Dorsolateral prefrontal cortex (tissue), 120 donors: ENCODE measurements at regions of chr6 and their contacts with region 1.

Region 1: GRCh38 chr6:53794720-53795253 is at the start of gene LRRC1:
- DNase-seq: peak; percentile 80 to 94 (median 90)
- H3K4me3 ChIP-seq: peak within 1 kb of the TSS; percentile 57 to 99 (median 92)
- H3K27ac ChIP-seq: peak within 1 kb of the TSS; percentile 20 to 95 (median 89)
- H3K27me3 ChIP-seq: peaks cover 0 to 2% (median 0%) of the 10 kb centered on the region in 45 donors
- CTCF ChIP-seq: peak in 4 of 56 donors; percentile 0 to 28 (median 9)
- total RNA-seq, gene LRRC1: 5.4 to 73.2 (median 19.4) TPM

Region 2: DNA sequence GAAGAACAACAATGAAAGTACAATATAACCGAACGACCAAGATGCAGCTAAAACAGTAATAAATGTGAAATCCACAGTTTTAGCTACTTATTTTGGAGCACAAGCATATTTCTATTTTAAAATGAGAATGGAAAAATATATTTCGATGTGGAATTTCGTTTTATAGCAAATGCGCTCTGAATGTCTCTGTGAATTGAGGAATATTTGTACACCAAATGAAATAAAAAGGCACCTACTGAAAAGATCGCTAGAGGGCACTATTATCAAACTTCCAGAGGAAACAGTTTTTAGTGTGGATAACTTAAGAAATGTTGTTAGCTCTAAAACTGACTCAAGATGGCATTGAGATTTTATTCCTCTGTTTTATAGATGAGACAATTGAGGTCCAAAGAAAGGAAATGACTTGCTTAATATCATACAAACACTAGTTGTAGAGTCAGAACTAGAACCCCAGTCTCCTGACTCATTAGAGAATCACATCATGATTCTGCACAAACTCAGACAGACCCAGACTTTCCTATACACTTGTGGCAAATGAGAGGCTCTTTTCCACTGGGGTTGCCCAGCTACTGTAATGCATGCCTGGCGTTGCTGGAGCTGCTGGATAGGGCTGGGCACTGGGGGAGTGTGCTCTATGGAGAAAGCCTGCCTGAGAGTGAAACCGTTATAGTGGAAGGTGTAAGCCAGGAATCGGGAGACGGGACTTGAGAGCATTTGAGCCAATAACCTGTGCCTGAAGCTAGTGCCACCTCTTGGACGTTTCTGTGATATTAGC is 301.7 kb before region 1 on chr6:
- intact Hi-C with region 1: no loop called
- DNase-seq: no peak
- H3K4me3 ChIP-seq: peak overlapping the region in 54 of 59 donors; percentile 9 to 64 (median 42)
- H3K27ac ChIP-seq: peak overlapping the region in 18 of 59 donors; percentile 8 to 63 (median 31)
- H3K27me3 ChIP-seq: no peaks in the 10 kb centered on the region
- CTCF ChIP-seq: peak; percentile 61 to 95 (median 86)

Region 3: DNA sequence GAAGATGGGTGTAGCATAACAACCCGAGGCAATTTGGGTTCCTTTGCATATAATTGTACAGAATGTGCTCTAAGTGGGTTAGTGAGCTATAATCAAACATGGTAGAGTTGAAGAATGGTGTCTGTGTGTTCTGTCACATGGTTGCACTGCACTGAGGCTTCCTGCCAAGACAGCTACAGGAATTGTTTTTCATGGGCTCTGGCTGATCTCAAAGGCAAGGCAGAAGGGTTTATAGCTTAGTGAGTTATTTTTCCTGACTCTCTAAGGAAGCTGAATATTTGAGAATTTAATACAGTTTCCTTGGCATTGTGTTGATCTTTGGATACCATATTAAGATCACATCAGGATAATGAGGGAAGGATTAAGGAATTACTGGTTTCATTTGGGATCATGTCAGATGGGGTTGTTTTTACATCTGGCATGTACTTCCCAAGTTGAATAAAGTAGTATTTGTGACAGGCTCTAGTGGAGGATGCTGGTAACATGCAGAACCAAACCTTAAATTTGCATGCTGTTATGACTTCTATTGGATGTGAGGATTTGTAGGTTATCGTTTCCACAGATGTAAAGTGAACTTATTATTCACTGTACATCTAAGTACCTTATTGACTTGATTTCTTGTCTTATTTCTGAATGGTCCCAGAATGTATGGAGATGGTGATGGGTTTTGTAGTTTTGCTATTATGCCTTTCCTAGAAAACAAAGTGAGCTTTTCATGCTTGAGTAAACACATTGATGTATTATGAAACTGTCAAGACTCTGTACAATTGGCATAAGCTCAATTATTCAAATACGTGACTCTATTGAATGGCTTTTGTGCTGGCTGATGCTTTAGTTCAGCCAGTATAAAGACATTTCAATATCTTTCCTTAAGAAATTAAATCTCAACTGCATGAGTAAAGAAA is 43.3 kb after region 1 on chr6:
- intact Hi-C with region 1: loop called (anchors 2 kb)
- DNase-seq: peak in 9 of 10 donors; percentile 38 to 84 (median 62)
- H3K4me3 ChIP-seq: peak overlapping the region in 33 of 59 donors; percentile 0 to 43 (median 21)
- H3K27ac ChIP-seq: peak overlapping the region; percentile 58 to 98 (median 91)
- H3K27me3 ChIP-seq: no peaks in the 10 kb centered on the region
- CTCF ChIP-seq: peak in 6 of 56 donors; percentile 4 to 17 (median 10)

Region 4: DNA sequence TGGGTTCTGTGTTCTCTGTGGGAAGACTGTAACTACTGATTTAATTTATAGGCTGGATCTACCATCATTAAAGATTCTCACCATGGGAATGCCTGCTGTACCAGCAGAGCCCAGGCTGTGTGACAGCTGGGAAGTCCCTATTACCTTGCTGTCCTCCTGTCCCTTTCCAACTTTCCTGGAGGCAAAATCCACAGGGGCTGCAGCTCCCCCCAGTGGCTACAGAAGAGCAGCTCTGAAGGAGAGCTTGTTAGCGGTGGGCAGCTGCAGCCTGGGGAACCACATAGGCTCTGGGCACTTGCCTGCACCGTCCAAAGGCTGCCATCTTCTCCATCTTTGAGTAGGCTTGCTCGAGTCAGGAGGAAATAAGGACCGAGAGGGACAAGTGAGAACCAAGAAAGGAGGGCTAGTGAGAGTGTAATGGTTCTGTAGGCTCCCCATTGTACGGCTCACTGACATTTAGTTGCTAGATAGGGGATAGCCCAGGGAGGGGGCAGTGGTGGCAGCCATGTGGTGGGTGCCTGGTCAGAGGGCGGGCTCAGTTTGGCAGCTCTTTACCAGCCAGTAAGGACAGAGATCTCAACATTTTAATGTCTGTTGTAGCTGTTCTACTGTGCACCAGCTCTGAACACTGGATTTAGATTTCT is 161.4 kb after region 1 on chr6:
- intact Hi-C with region 1: loop called (anchors 1 kb)
- DNase-seq: peak; percentile 13 to 85 (median 80)
- H3K4me3 ChIP-seq: no peak overlapping the region
- H3K27ac ChIP-seq: peak overlapping the region in 1 of 59 donors; percentile 26
- H3K27me3 ChIP-seq: no peaks in the 10 kb centered on the region
- CTCF ChIP-seq: peak; percentile 31 to 93 (median 84)

Region 5: GRCh38 chr6:54574404-54575081 is 779.8 kb after region 1 on chr6:
- intact Hi-C with region 1: no loop called
- DNase-seq: no peak
- H3K4me3 ChIP-seq: no peak overlapping the region
- H3K27ac ChIP-seq: no peak overlapping the region
- H3K27me3 ChIP-seq: no peaks in the 10 kb centered on the region
- CTCF ChIP-seq: no peak